ENCODE measurements at regions of chr11 and their contacts with region 1.

Region 1: DNA sequence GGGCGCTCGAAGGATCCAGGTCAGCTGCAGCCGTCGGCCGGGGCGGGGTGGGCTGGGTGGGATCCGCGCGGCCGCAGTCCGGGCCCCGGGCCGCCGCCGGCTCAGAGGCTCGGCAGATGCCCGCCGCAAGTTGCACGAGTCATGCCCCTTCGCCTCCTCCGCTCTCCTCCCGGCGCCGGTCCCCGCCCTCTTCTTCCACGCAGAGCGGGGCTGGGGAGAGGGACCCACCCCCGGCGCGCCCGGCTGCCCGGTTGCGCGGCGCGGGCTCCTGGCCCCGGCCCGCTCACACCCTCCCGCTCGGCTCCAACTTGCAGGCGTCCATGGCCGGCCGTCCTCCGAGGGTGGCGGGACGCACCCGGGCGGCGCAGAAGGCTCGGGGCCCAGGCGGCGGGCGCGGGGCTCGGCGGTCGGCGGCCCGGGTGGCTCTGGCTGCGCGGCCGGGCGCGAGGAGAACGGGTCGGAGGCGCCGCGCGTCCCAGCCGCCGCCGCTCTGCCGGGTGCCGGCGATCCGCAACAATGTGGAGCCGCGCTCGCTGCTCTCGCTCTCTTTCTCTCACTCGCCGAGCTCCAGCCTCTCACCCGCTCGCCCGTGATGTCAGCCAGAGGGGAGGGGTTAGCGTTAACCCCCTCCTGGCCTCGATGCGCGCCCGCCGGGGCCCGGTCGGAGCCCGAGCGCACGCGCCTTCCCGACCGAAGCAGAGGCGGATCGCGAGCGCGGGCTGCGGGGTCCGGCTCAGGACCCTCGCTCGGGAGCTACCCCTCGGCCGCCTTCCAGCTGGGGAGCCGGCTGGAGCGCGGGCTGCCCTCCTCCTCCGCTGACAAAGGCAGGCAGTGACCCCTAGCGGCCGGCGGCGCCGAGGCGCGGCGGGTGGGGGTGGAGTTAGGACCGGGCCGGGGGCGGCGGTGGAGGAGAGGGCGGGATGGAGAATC is at the start of gene NECTIN1:
- DNase-seq: peak; percentile 92
- ATAC-seq: peak; percentile 91
- H3K4me3 Mint-ChIP-seq: peak within 1 kb of the TSS; percentile 74
- H3K27ac Mint-ChIP-seq: no peak within 1 kb of the TSS
- H3K4me1 Mint-ChIP-seq: peaks cover 12% of the 10 kb centered on the region
- H3K27me3 Mint-ChIP-seq: peaks cover 24% of the 10 kb centered on the region
- total RNA-seq, gene NECTIN1: 1.6 to 1.7 TPM

Region 2: GRCh38 chr11:119481021-119481666 is 247.8 kb before region 1 on chr11:
- CTCF ChIA-PET with region 1: interaction called, 3 read pairs
- POLR2A ChIA-PET with region 1: no interaction called
- intact Hi-C with region 1: loop called in 1 of 2 experiments (anchors 1 kb)
- DNase-seq: peak; percentile 88
- ATAC-seq: peak; percentile 92
- H3K4me3 Mint-ChIP-seq: no peak overlapping the region
- H3K27ac Mint-ChIP-seq: no peak overlapping the region
- H3K4me1 Mint-ChIP-seq: no peaks in the 10 kb centered on the region
- H3K27me3 Mint-ChIP-seq: peaks cover 21% of the 10 kb centered on the region

Region 3: GRCh38 chr11:119666463-119667131 is 62.3 kb before region 1 on chr11:
- CTCF ChIA-PET with region 1: interaction called, 3 read pairs
- POLR2A ChIA-PET with region 1: no interaction called
- intact Hi-C with region 1: loop called (anchors 1 kb)
- DNase-seq: peak; percentile 79
- ATAC-seq: peak; percentile 96
- H3K4me3 Mint-ChIP-seq: no peak overlapping the region
- H3K27ac Mint-ChIP-seq: no peak overlapping the region
- H3K4me1 Mint-ChIP-seq: no peaks in the 10 kb centered on the region
- H3K27me3 Mint-ChIP-seq: no peaks in the 10 kb centered on the region

Region 4: GRCh38 chr11:119741369-119742262 is 12.7 kb after region 1 on chr11:
- CTCF ChIA-PET with region 1: interaction called, 14 read pairs
- POLR2A ChIA-PET with region 1: no interaction called
- intact Hi-C with region 1: no loop called
- DNase-seq: peak; percentile 79
- ATAC-seq: peak; percentile 83
- H3K4me3 Mint-ChIP-seq: no peak overlapping the region
- H3K27ac Mint-ChIP-seq: no peak overlapping the region
- H3K4me1 Mint-ChIP-seq: peaks cover 10% of the 10 kb centered on the region
- H3K27me3 Mint-ChIP-seq: peaks cover 39% of the 10 kb centered on the region

Region 5: GRCh38 chr11:120210626-120211521 is 482.0 kb after region 1 on chr11 and contains the start of gene OAF:
- CTCF ChIA-PET with region 1: no interaction called
- POLR2A ChIA-PET with region 1: no interaction called
- intact Hi-C with region 1: loop called in 1 of 2 experiments (anchors 1 kb)
- DNase-seq: peak; percentile 70
- ATAC-seq: peak; percentile 93
- H3K4me3 Mint-ChIP-seq: peak within 1 kb of the TSS; percentile 74
- H3K27ac Mint-ChIP-seq: peak within 1 kb of the TSS; percentile 34
- H3K4me1 Mint-ChIP-seq: peaks cover 11% of the 10 kb centered on the region
- H3K27me3 Mint-ChIP-seq: peaks cover 25% of the 10 kb centered on the region
- total RNA-seq, gene OAF: 1.4 to 1.6 TPM

Measured in activated CD4-positive, alpha-beta T cell treated with anti-CD3 and anti-CD28 coated beads for 36 hours (primary cell).